SK-N-SH (cell line): ENCODE measurements at regions of chr13 and their contacts with region 1.

Region 1: GRCh38 chr13:80342471-80343380 is 1.8 kb upstream of the SPRY2 start:
- DNase-seq: peak; percentile 84
- H3K4me3 ChIP-seq: peak overlapping the region; percentile 65 to 76
- H3K27ac ChIP-seq: peak overlapping the region; percentile 95 to 100; a peak in 3 of 4 replicates
- H3K4me1 ChIP-seq: peaks cover 5 to 8% of the 10 kb centered on the region in 2 experiments; a peak in 3 of 4 replicates
- H3K27me3 ChIP-seq: no peaks in the 10 kb centered on the region
- CTCF ChIP-seq: peak; percentile 85
- EP300 ChIP-seq: no peak
- RAD21 ChIP-seq: peak; percentile 80

Region 2: DNA sequence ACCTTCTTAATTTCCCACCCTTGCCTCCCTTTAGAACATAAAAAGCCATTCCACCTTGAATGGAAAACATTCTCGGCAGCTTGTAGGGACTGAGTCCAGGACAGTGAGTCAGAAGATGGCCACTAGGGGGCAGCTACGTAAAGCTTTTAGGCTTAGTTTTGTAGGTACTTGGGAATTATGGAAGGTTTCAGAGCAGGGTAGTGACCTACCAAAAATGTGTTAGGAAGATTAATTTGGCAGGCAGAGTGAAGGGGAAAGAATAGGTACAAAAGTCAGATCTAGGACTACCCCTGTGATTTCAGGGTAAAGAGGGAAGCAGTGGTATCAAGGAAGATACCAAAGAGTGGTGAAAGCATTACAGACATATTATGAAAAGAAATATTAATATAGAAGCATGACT is 663.4 kb before region 1 on chr13:
- CTCF ChIA-PET with region 1: interaction called, 20 read pairs
- POLR2A ChIA-PET with region 1: interaction called, 3 read pairs
- DNase-seq: peak; percentile 12
- H3K4me3 ChIP-seq: no peak overlapping the region
- H3K27ac ChIP-seq: peak overlapping the region in 1 of 2 experiments; percentile 92; a peak in 2 of 4 replicates
- H3K4me1 ChIP-seq: peaks cover 14 to 30% of the 10 kb centered on the region in 2 experiments; a peak in 3 of 4 replicates
- H3K27me3 ChIP-seq: no peaks in the 10 kb centered on the region
- CTCF ChIP-seq: peak; percentile 80
- EP300 ChIP-seq: peak in 1 of 2 experiments; percentile 47; a peak in 1 of 4 replicates
- RAD21 ChIP-seq: peak; percentile 88

Region 3: GRCh38 chr13:80284290-80284689 is 58.4 kb before region 1 on chr13:
- CTCF ChIA-PET with region 1: interaction called, 10 read pairs
- POLR2A ChIA-PET with region 1: no interaction called
- DNase-seq: peak; percentile 42
- H3K4me3 ChIP-seq: no peak overlapping the region
- H3K27ac ChIP-seq: peak overlapping the region in 1 of 2 experiments; percentile 20; a peak in 1 of 4 replicates
- H3K4me1 ChIP-seq: peaks cover 0 to 4% of the 10 kb centered on the region in 2 experiments; a peak in 2 of 4 replicates
- H3K27me3 ChIP-seq: no peaks in the 10 kb centered on the region
- CTCF ChIP-seq: no peak
- EP300 ChIP-seq: peak in 1 of 2 experiments; percentile 79; a peak in 2 of 4 replicates
- RAD21 ChIP-seq: peak; percentile 7; the same call in 1 of the 2 replicates

Region 4: DNA sequence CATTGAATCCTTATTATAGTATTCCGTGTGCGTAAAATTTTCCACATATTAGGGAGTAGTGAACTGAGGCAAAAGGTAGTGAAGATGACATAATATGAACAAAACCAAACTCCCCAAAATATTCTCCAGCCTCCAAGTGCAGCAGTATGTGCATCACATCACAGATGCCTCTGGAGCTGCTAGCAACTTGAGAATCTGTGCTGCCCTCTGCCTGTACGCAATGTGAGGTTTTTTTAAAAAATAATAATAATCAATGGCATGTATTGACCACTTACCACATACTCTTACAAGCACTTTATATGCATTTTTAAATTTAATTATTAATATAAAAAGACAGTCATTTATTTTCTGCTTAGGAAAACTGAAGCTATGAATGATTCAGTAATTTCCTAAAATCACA is 581.2 kb after region 1 on chr13:
- CTCF ChIA-PET with region 1: interaction called, 14 read pairs
- POLR2A ChIA-PET with region 1: no interaction called
- DNase-seq: peak; percentile 3
- H3K4me3 ChIP-seq: no peak overlapping the region
- H3K27ac ChIP-seq: peak overlapping the region in 1 of 2 experiments; percentile 76; a peak in 1 of 4 replicates
- H3K4me1 ChIP-seq: no peaks in the 10 kb centered on the region; a peak in 2 of 4 replicates
- H3K27me3 ChIP-seq: no peaks in the 10 kb centered on the region
- CTCF ChIP-seq: peak; percentile 14
- EP300 ChIP-seq: no peak
- RAD21 ChIP-seq: peak; percentile 60

Region 5: GRCh38 chr13:81017513-81018152 is 674.9 kb after region 1 on chr13:
- CTCF ChIA-PET with region 1: interaction called, 44 read pairs
- POLR2A ChIA-PET with region 1: interaction called, 3 read pairs
- DNase-seq: peak; percentile 44
- H3K4me3 ChIP-seq: no peak overlapping the region
- H3K27ac ChIP-seq: no peak overlapping the region
- H3K4me1 ChIP-seq: peaks cover 0 to 3% of the 10 kb centered on the region in 2 experiments; a peak in 2 of 4 replicates
- H3K27me3 ChIP-seq: no peaks in the 10 kb centered on the region
- CTCF ChIP-seq: peak; percentile 81
- EP300 ChIP-seq: no peak
- RAD21 ChIP-seq: peak; percentile 85